CD4-positive, alpha-beta memory T cell (primary cell): ENCODE measurements at regions of chr17 and their contacts with region 1.

Region 1: GRCh38 chr17:63621766-63622519 is at the start of gene MAP3K3:
- DNase-seq: peak; percentile 97 to 100 (median 98)
- H3K4me3 ChIP-seq: peak within 1 kb of the TSS; percentile 61 to 77
- H3K4me3 Mint-ChIP-seq: peak within 1 kb of the TSS; percentile 95 to 99 (median 98)
- H3K27ac ChIP-seq: peak within 1 kb of the TSS; percentile 79
- H3K27ac Mint-ChIP-seq: peak within 1 kb of the TSS; percentile 90 to 96 (median 94)
- H3K4me1 ChIP-seq: peaks cover 44% of the 10 kb centered on the region
- H3K4me1 Mint-ChIP-seq: peaks cover 29 to 50% (median 40%) of the 10 kb centered on the region in 4 donors
- H3K27me3 ChIP-seq: no peaks in the 10 kb centered on the region
- H3K27me3 Mint-ChIP-seq: no peaks in the 10 kb centered on the region
- total RNA-seq, gene MAP3K3: 98.5 to 98.8 TPM

Region 2: DNA sequence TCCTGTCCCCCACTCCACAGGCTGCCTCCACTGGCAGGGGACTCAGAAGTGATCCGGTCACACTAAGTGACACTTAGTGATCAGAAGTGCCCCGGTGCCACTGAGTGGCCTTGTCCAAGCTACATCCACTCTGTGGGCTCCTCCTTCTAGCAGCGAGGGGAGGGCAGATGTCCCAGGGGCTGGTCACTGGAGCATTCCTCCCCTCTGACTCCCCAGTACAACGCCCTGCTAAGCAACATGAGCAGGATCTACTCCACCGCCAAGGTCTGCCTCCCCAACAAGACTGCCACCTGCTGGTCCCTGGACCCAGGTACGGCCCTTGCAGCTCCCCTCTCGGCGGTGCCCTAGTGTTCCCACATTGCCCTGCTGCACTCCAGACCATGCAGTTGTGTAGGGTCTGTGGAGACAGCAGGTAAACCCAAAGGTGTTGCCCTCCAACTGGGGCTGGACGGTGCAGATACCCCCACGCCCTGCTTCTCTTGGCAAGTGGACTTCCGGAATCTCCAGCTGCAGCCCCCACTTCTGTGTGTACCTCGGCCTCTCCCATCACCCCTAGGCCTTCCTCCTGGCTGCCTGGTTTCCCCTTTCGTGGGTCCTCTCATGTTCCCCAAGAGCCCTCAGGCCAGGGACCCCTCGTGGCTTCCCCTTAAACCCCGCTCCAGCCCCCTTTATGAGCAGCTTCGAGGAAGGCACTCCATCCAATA is 143.0 kb before region 1 on chr17:
- CTCF ChIA-PET with region 1: interaction called, 3 read pairs
- POLR2A ChIA-PET with region 1: interaction called, 12 read pairs
- intact Hi-C with region 1: no loop called
- DNase-seq: peak; percentile 76 to 83 (median 77)
- H3K4me3 ChIP-seq: no peak overlapping the region
- H3K4me3 Mint-ChIP-seq: peak overlapping the region; percentile 49 to 86 (median 70)
- H3K27ac ChIP-seq: no peak overlapping the region
- H3K27ac Mint-ChIP-seq: peak overlapping the region in 5 of 7 donors; percentile 32 to 75 (median 57)
- H3K4me1 ChIP-seq: peaks cover 27% of the 10 kb centered on the region
- H3K4me1 Mint-ChIP-seq: peaks cover 8 to 34% (median 16%) of the 10 kb centered on the region in 4 donors
- H3K27me3 ChIP-seq: peaks cover 8% of the 10 kb centered on the region
- H3K27me3 Mint-ChIP-seq: no peaks in the 10 kb centered on the region

Region 3: GRCh38 chr17:63503334-63503692 is 118.6 kb before region 1 on chr17:
- CTCF ChIA-PET with region 1: no interaction called
- POLR2A ChIA-PET with region 1: no interaction called
- intact Hi-C with region 1: no loop called
- DNase-seq: no peak
- H3K4me3 ChIP-seq: no peak overlapping the region
- H3K4me3 Mint-ChIP-seq: no peak overlapping the region
- H3K27ac ChIP-seq: no peak overlapping the region
- H3K27ac Mint-ChIP-seq: no peak overlapping the region
- H3K4me1 ChIP-seq: no peaks in the 10 kb centered on the region
- H3K4me1 Mint-ChIP-seq: peaks cover 0 to 2% (median 0%) of the 10 kb centered on the region in 4 donors
- H3K27me3 ChIP-seq: no peaks in the 10 kb centered on the region
- H3K27me3 Mint-ChIP-seq: peaks cover 5 to 12% of the 10 kb centered on the region in 2 donors

Region 4: GRCh38 chr17:63600569-63601438 is 21.1 kb before region 1 on chr17 and contains the start of gene TACO1:
- CTCF ChIA-PET with region 1: interaction called, 3 read pairs
- POLR2A ChIA-PET with region 1: interaction called, 18 read pairs
- intact Hi-C with region 1: loop called (anchors 2 kb)
- DNase-seq: peak; percentile 65 to 71 (median 69)
- H3K4me3 ChIP-seq: peak within 1 kb of the TSS; percentile 59 to 69
- H3K4me3 Mint-ChIP-seq: peak within 1 kb of the TSS; percentile 90 to 98 (median 95)
- H3K27ac ChIP-seq: peak within 1 kb of the TSS; percentile 70
- H3K27ac Mint-ChIP-seq: peak within 1 kb of the TSS; percentile 91 to 97 (median 95)
- H3K4me1 ChIP-seq: peaks cover 55% of the 10 kb centered on the region
- H3K4me1 Mint-ChIP-seq: peaks cover 34 to 57% (median 42%) of the 10 kb centered on the region in 4 donors
- H3K27me3 ChIP-seq: no peaks in the 10 kb centered on the region
- H3K27me3 Mint-ChIP-seq: no peaks in the 10 kb centered on the region
- total RNA-seq, gene TACO1: 17.7 to 20.3 TPM

Region 5: DNA sequence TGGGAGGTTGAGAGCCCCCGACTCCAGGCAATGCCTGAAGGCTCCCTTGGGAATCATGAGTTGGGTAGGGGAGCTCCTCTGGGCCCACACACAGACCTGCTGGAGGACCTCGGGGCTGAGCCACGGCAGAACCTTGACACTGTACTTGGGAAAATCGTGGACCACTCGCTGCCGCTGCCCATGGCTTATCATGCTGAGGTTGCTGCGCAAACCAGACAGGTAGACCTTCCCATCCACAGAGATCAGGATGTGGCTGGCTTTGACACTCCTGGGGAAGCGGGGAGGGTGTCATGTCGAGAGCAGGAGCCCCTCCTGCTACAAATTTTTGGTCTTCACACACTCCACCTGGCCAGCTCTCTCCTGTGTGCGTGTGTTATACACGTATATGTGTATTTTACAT is 85.2 kb after region 1 on chr17:
- CTCF ChIA-PET with region 1: interaction called, 13 read pairs
- POLR2A ChIA-PET with region 1: interaction called, 58 read pairs
- intact Hi-C with region 1: loop called (anchors 1 kb)
- DNase-seq: peak; percentile 33 to 70 (median 41)
- H3K4me3 ChIP-seq: peak overlapping the region; percentile 21 to 34
- H3K4me3 Mint-ChIP-seq: peak overlapping the region; percentile 77 to 89 (median 80)
- H3K27ac ChIP-seq: peak overlapping the region; percentile 51
- H3K27ac Mint-ChIP-seq: peak overlapping the region; percentile 85 to 100 (median 93)
- H3K4me1 ChIP-seq: peaks cover 88% of the 10 kb centered on the region
- H3K4me1 Mint-ChIP-seq: peaks cover 52 to 83% (median 73%) of the 10 kb centered on the region in 4 donors
- H3K27me3 ChIP-seq: no peaks in the 10 kb centered on the region
- H3K27me3 Mint-ChIP-seq: no peaks in the 10 kb centered on the region

Region 6: DNA sequence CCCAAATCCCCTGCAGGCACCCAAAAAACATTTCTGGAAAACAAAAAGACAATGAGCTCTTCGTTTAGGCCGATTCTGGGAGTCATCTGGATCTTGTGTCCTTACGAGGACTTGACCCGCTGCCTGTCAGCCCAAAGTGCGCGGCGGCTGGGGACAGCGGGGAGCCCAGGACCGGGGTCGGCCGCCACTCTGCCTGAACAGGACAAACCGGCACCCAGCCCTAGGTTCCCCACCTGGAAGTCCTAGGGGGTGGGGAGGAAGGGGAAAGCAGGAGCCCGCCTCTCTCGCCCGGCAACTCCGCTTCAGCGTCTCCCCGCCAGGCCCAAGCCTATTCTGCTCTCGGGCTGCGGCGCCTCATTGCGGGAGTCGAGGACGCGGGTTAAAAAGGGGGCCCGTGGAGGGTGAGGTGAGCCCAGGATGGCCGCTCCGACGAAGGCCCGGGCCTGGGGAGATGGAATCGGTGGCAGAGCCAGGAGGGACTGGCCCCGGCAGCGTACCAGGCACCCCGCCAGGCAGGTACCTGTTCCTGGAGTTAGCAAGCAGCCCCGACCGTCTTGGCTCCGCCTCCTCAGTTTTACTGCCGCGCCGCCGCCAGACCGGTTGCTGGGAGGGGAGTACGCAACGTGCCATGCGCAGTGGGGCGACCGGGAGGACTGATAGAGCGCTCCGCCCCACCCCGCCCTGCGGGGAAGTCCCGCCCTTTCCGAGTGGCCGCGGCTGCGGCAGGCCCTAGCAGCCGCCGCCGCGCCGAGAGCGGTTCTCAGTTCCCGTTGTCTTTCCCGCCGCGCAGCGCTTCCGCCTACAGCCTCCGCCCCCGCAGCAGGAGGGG is 119.5 kb after region 1 on chr17 and contains the start of gene STRADA:
- CTCF ChIA-PET with region 1: no interaction called
- POLR2A ChIA-PET with region 1: interaction called, 13 read pairs
- intact Hi-C with region 1: loop called (anchors 1 kb)
- DNase-seq: peak; percentile 97 to 99 (median 99)
- H3K4me3 ChIP-seq: peak within 1 kb of the TSS; percentile 78 to 81
- H3K4me3 Mint-ChIP-seq: peak within 1 kb of the TSS; percentile 87 to 96 (median 92)
- H3K27ac ChIP-seq: peak within 1 kb of the TSS; percentile 88
- H3K27ac Mint-ChIP-seq: peak within 1 kb of the TSS; percentile 88 to 98 (median 97)
- H3K4me1 ChIP-seq: peaks cover 14% of the 10 kb centered on the region
- H3K4me1 Mint-ChIP-seq: peaks cover 14 to 32% (median 24%) of the 10 kb centered on the region in 4 donors
- H3K27me3 ChIP-seq: no peaks in the 10 kb centered on the region
- H3K27me3 Mint-ChIP-seq: no peaks in the 10 kb centered on the region
- total RNA-seq, gene STRADA: 55.6 to 58.3 TPM

Region 7: DNA sequence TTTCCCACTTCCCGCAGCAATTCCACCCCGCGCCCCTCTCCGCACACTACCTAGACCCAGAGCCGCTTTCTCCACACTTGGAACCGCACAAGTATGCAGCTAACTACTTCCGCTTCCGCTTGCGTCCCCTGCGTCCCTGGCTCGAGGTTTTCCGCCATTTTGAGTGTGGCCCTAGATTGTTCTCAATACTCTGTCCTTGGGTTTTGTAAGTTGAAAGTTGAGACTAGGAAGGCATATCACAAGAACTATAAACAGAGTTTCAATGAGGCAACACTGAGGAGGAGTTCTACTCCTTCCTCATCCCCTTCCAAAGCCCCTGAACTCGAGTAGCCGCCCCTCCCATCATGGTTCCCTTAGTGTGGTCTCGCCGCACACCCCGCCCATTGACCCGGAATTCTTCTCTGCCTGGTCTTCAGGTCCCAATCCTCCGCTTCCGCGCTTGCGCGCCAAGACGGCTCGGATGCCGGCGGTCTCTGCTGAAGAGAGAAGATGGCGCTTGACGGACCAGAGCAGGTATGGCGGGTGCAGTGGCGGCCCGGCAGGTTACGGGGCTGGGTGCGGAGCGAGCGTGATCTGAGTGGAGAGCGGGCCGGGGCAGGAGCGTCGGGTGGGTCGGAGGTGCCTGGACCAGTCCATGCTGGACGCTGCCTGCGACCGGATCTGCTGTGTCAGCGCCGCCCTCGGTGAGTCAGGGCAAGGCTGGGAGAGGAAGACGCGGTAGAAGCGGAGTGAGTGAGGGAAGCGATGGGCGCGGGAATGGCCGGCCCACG is 205.2 kb after region 1 on chr17 and contains the starts of genes FTSJ3 and PSMC5:
- CTCF ChIA-PET with region 1: no interaction called
- POLR2A ChIA-PET with region 1: interaction called, 3 read pairs
- intact Hi-C with region 1: loop called (anchors 5 kb)
- DNase-seq: peak; percentile 96 to 98 (median 97)
- H3K4me3 ChIP-seq: peak within 1 kb of the TSS; percentile 93
- H3K4me3 Mint-ChIP-seq: peak within 1 kb of the TSS; percentile 93 to 100 (median 98)
- H3K27ac ChIP-seq: peak within 1 kb of the TSS; percentile 90
- H3K27ac Mint-ChIP-seq: peak within 1 kb of the TSS; percentile 95 to 100 (median 100)
- H3K4me1 ChIP-seq: peaks cover 61% of the 10 kb centered on the region
- H3K4me1 Mint-ChIP-seq: peaks cover 46 to 92% (median 74%) of the 10 kb centered on the region in 4 donors
- H3K27me3 ChIP-seq: no peaks in the 10 kb centered on the region
- H3K27me3 Mint-ChIP-seq: no peaks in the 10 kb centered on the region
- total RNA-seq, gene FTSJ3: 62.1 to 62.2 TPM
- total RNA-seq, gene PSMC5: 121 TPM